ENCODE measurements at regions of chr16 and their contacts with region 1.

Region 1: GRCh38 chr16:66004699-66005098 is 361.8 kb upstream of the CDH5 start:
- DNase-seq: no peak
- H3K4me3 ChIP-seq: no peak overlapping the region
- H3K27ac ChIP-seq: no peak overlapping the region
- H3K4me1 ChIP-seq: no peaks in the 10 kb centered on the region; a peak in 1 of 7 replicates
- H3K27me3 ChIP-seq: no peaks in the 10 kb centered on the region; a peak in 1 of 7 replicates
- CTCF ChIP-seq: no peak
- EP300 ChIP-seq: no peak
- POLR2A ChIP-seq: no peak
- RAD21 ChIP-seq: no peak

Region 2: DNA sequence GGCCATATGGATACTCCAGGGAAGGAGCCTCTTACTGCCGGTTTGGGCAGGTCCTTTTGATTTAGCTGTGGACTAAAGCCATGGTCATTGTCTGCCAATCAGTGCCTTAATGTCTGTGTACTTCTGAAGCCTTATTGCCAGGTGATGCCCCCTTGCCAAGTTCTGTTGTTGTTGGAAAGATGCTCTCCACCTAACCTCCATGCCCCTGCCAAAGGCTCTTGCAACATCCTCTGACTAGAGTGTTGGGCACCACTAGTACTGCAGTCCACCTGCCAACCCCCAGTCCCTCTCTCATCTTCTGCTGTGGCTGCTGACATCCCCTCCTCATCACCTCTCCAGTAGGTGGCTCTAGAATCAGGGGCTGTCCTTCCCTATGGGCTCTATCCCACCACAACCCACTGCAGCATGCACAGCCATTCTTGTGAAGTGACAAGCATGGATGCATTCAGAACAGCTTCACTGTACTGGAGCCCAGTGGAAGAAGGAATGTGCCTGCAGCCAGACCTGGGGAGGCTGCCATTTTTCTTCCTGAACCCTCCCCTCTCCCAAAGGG is 13.5 kb before region 1 on chr16:
- CTCF ChIA-PET with region 1: interaction called, 15 read pairs
- POLR2A ChIA-PET with region 1: no interaction called
- DNase-seq: no peak
- H3K4me3 ChIP-seq: no peak overlapping the region
- H3K27ac ChIP-seq: no peak overlapping the region
- H3K4me1 ChIP-seq: no peaks in the 10 kb centered on the region
- H3K27me3 ChIP-seq: no peaks in the 10 kb centered on the region
- CTCF ChIP-seq: peak; percentile 30 to 46 (median 44)
- EP300 ChIP-seq: no peak
- POLR2A ChIP-seq: no peak
- RAD21 ChIP-seq: peak; percentile 45 to 59; a peak in 3 of 4 replicates

Measured in H1 (cell line).